H1 (cell line): ENCODE measurements at regions of chr6 and their contacts with region 1.

Region 1: GRCh38 chr6:46243754-46244153 is 73.0 kb upstream of the ENPP5 start:
- DNase-seq: no peak
- H3K4me3 ChIP-seq: no peak overlapping the region
- H3K27ac ChIP-seq: no peak overlapping the region
- H3K4me1 ChIP-seq: no peaks in the 10 kb centered on the region
- H3K27me3 ChIP-seq: no peaks in the 10 kb centered on the region
- CTCF ChIP-seq: no peak
- EP300 ChIP-seq: no peak
- POLR2A ChIP-seq: no peak
- RAD21 ChIP-seq: no peak

Region 2: GRCh38 chr6:46221222-46221793 is 22.4 kb before region 1 on chr6:
- CTCF ChIA-PET with region 1: interaction called, 13 read pairs
- POLR2A ChIA-PET with region 1: no interaction called
- DNase-seq: no peak
- H3K4me3 ChIP-seq: no peak overlapping the region
- H3K27ac ChIP-seq: no peak overlapping the region
- H3K4me1 ChIP-seq: no peaks in the 10 kb centered on the region
- H3K27me3 ChIP-seq: no peaks in the 10 kb centered on the region
- CTCF ChIP-seq: peak in 2 of 3 experiments; percentile 80; a peak in 3 of 4 replicates
- EP300 ChIP-seq: no peak
- POLR2A ChIP-seq: no peak
- RAD21 ChIP-seq: peak; percentile 93 to 94

Region 3: GRCh38 chr6:46271107-46271506 is 27.4 kb after region 1 on chr6:
- CTCF ChIA-PET with region 1: no interaction called
- POLR2A ChIA-PET with region 1: no interaction called
- DNase-seq: no peak
- H3K4me3 ChIP-seq: no peak overlapping the region
- H3K27ac ChIP-seq: no peak overlapping the region
- H3K4me1 ChIP-seq: no peaks in the 10 kb centered on the region
- H3K27me3 ChIP-seq: no peaks in the 10 kb centered on the region
- CTCF ChIP-seq: no peak
- EP300 ChIP-seq: no peak
- POLR2A ChIP-seq: no peak
- RAD21 ChIP-seq: no peak